HEK293T (cell line): ENCODE measurements at regions of chr16 and their contacts with region 1.

Region 1: DNA sequence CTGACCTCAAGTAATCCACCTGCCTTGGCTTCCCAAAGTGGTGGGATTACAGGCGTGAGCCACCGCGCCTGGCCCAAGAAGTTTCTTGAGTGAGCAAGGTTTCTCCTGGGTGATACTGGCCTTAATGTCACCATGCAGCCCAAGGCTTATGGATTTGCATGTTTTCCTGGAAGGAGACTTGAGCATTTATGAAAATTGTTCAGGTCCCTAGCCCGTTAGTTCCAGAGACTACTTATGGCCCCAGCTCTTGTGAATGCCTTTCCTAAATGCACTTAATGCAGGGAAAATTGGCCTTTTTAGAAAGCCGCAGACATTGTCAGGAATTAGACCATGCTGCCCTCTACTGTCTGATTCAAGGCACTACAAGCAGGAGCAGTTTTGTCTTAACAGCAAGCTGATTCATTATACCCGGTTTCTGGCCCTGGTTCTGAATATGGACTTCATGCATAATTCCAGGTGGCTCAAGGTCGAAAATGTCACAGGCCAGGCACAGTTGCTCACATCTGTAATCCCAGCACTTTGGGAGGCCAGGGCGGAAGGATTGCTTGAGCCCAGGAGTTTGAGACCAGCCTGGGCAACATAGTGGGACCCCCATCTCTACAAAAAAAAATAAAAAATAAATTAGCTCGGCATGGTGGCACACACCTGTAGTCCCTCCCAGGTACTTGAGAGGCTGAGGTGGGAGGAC is 91.3 kb downstream of the SNX29 start:
- DNase-seq: peak; percentile 75

Region 2: DNA sequence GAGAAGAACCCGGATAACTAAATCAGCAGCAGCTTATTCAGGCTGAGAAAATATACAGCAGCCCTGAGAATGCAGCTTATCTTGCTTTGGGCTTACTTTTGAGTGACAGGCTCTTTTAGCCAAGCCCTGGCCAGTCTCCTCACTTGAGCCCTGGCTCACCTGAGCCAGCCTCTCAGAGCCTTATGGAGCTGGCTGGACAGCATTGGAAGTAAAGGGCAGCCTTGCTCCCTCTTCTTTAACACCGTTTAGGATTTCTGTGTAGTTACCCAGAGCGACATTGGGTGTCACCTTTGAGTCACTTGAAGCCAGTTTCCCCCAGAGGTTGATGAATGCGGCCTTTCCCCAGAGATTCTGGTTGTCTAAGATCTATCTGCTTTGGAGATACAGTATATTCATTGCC is 118.3 kb before region 1 on chr16:
- CTCF ChIA-PET with region 1: interaction called, 16 read pairs
- POLR2A ChIA-PET with region 1: interaction called, 4 read pairs
- DNase-seq: peak; percentile 64

Region 3: DNA sequence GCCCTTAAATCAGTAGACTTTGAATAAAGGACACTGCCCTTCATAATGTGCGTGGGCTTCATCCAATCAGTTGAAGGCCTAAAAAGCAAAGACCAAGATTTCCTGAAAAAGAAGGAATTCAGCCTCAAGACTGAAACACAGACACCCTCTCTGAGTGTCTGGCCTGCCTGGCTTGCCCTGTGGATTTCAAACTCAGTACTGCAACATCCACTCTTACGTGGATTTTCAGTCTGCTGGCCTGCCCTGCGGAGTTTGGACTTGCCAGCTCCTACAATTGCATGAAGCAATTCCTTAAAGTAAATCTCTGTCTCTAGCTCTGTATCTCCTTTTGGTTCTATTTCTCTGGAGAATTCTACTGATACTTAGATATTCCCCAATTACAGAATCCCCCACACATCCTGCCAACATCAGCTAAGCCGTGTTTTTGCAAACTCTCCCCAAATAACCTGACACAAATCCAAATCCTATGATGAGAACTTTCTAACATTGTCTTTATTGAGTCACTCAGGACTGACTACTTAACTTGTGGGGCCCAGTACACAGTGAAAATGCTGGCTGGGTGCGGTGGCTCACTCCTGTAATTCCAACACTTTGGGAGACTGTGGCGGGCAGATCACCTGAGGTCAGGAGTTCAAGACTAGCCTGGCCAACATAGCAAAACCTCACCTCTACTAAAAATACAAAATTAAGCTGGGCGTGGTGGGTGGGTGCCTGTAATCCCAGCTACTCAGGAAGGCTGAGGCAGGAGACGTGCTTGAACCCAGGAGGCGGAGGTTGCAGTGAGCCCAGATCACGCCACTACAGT is 110.1 kb before region 1 on chr16:
- CTCF ChIA-PET with region 1: interaction called, 10 read pairs
- POLR2A ChIA-PET with region 1: no interaction called
- DNase-seq: no peak

Region 4: DNA sequence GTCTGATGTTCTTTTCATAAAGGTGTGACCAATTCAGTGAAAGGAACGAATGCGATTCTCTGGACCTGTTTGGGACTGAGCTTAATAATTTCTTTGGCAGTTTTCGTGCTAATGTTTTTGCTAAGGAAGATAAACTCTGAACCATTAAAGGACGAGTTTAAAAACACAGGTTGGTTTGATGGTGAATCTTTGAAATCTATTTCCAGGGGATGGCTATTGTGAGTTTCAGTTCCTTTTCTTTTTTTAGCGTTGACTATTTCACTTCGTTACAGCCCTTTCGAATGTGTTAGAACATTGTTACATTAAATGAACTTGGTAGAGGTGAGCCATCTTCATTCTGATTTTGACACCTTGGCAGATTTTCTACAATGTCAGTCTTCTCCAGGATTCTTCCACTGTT is 101.7 kb before region 1 on chr16:
- CTCF ChIA-PET with region 1: interaction called, 12 read pairs
- POLR2A ChIA-PET with region 1: no interaction called
- DNase-seq: no peak

Region 5: DNA sequence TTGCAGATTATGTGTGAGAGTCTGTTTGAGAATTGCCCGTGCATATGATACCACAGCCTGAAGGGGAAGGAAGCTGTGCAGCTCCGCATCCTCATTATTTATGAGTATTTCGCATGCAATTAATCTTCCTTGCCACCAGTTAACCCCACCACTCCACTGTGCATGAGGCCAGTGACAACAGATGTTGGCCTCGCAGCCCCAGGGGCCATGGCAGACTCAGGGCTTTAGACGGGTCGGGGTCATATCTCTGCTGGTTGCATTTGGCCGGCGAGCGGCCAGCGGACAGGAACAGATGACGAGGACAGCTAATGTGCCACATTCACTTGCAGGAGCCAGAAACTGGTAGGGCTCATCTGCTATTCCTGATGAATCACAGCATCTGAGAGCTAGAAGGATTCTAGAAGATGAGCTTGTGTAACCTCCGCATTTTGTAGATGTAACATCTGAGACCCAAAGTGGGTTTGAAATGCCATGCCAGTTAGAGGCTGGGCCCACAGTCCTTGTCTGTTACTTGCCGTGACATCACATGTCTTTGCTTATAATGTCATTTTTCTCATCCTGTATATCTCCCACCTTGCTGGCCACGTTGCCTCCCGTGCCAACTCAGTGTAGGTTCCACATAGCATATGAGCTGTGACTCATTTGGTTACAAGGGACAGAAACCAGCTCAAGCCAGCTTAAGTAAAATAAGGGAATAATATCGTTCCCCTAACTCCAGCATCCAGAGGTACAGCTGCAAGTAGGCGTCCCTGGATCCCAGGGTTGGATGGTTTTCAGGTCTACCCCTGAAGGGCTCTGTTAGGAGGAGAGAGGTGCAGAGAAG is 45.9 kb after region 1 on chr16:
- CTCF ChIA-PET with region 1: no interaction called
- POLR2A ChIA-PET with region 1: no interaction called
- DNase-seq: no peak